Heart right ventricle (tissue), 16 donors: ENCODE measurements at regions of chr6 and their contacts with region 1.

Region 1: DNA sequence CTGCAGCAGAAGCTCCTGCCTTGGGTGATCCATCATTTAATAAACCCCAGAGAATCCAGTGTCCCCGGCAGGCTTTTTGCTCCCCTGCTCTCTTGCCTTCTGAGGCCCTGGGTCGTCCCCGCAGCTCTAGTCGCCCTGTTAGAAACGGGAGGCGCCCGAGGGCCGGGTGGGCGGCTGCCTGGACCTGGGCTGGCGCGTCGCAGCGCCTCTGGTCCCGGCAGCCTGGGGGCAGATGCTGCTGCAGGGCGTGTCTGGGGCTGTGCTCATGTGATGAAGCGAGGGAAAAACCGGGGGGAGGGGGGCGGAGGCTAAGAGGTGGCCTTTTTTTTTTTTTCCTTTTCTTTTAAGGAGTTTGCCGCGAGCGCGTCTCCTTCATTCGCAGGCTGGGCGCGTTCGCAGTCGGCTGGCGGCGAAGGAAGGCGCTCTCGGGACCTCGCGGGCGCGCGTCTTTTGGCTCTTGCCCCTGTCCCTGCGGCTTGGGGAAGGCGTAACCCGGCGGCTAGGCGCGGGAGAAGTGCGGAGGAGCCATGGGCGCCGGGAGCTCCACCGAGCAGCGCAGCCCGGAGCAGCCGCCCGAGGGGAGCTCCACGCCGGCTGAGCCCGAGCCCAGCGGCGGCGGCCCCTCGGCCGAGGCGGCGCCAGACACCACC is 394 bp downstream of the AKAP12 start:
- DNase-seq: peak; percentile 76 to 84
- ATAC-seq: peak; percentile 88 to 94 (median 91)
- H3K4me3 ChIP-seq: peak overlapping the region; percentile 68 to 94 (median 77)
- H3K27ac ChIP-seq: peak overlapping the region; percentile 77 to 89 (median 84)
- H3K4me1 ChIP-seq: peaks cover 4 to 32% (median 11%) of the 10 kb centered on the region in 9 donors
- H3K27me3 ChIP-seq: peaks cover 0 to 57% (median 7%) of the 10 kb centered on the region in 7 donors
- CTCF ChIP-seq: peak in 3 of 9 donors; percentile 35 to 37 (median 35)

Region 2: DNA sequence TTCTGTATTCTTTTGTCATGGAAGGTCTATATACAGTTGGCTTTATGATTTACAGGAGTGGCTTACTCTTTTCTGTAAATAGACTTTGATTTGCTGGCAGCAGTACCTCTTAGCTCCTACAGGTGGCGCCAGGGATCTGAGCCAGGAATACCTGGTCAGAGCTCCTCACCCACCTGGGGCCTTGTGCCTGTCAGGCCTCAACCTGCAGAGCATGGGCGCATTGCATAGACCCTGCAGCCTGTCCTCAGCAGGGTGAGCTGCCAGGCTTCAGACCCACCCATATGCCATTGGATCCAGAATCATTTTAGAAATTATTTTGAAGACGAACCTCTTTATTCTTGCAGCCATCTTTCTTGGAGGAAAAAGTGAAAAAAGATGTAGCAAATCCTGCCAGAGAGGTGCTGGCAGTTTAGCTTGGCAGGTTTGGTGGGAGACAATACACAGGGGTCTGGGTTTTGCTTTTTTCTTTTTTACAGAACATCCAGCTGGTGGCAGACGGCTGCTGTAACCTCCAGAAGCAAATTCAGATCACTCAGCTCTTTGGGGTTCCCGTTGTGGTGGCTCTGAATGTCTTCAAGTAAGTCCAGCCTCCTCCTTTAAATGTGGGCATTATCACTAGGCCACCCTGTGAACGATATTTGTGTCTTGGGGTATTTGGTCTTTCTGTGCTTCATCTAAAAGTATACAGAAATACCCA is 225.6 kb before region 1 on chr6:
- intact Hi-C with region 1: loop called in 7 of 10 experiments (anchors 2 to 10 kb)
- DNase-seq: peak; percentile 61 to 68
- ATAC-seq: peak; percentile 59 to 84 (median 79)
- H3K4me3 ChIP-seq: peak overlapping the region in 4 of 10 donors; percentile 13 to 20 (median 18)
- H3K27ac ChIP-seq: no peak overlapping the region
- H3K4me1 ChIP-seq: peaks cover 0 to 7% (median 0%) of the 10 kb centered on the region in 9 donors
- H3K27me3 ChIP-seq: no peaks in the 10 kb centered on the region
- CTCF ChIP-seq: peak; percentile 96 to 100 (median 98)

Region 3: DNA sequence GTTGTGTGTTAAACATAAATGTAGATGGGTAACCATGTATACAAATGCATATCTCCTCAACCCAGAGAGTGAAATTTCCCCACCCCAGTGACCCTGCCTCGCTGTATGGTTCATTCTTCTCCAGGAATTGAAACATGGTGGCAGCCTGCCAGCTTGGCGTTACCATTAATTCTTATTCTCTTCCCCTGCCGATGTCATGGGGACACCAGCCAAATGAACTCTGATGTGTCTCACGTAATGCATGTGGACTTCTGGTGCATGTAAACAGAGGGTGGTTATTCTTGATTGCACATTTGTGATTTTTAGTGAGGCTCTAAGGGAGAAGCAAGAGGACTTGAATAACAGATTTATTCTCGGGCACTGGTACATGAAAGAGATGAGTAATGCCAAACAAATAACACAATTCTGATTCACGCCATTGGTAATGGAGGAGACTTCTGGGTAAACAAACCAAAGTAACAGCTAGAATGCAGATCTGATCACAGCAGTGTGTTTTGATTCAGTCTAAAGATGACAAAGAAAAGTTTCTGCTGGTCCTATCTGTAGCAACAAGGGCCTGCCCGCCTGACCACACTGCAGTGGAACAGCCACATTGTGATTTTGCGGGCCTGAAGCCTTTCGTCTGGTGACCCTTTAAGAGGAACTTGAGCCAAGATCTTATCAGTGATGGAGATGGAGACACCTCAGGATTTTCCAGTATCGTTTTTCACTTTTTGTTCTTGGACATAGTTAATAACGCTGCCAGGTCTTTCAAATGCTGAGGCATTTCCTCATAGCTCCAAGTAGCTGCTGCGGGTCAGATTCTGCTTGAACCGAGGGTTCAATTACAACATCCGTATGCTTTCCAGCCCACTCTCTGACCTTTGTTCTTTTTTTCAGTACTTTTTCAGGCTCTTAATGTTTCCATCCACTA is 172.2 kb before region 1 on chr6:
- intact Hi-C with region 1: loop called in 1 of 10 experiments (anchors 10 kb)
- DNase-seq: peak; percentile 64 to 66
- ATAC-seq: peak; percentile 44 to 82 (median 69)
- H3K4me3 ChIP-seq: no peak overlapping the region
- H3K27ac ChIP-seq: peak overlapping the region; percentile 12 to 79 (median 74)
- H3K4me1 ChIP-seq: peaks cover 0 to 65% (median 30%) of the 10 kb centered on the region in 9 donors
- H3K27me3 ChIP-seq: no peaks in the 10 kb centered on the region
- CTCF ChIP-seq: no peak

Region 4: DNA sequence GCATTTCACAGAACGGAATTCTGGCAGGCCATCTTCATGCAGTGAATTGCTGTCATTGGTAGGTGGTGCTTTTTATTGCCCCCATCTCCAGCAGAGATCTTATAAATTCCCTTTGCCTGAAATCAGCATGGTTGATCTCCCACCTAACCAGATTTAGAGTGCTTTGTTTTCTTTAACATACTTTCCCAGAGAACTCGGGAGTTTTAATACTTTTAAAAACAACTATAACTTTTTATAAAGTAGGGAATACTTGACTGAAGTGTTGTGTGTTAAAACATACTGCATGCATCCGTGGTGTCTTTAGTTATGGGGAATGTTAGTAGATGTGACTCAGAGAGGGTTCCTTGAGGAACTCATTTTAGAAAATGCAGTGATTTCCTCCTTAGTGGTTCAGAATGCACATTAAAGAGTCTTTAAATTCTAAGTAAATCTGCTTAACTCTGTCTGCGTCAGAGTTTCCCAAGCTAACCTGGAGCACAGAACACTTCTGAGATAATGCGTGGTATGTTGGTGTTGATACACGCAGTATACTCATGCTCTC is 54.5 kb after region 1 on chr6:
- intact Hi-C with region 1: loop called in 1 of 10 experiments (anchors 5 kb)
- DNase-seq: no peak
- ATAC-seq: no peak
- H3K4me3 ChIP-seq: no peak overlapping the region
- H3K27ac ChIP-seq: no peak overlapping the region
- H3K4me1 ChIP-seq: peaks cover 0 to 30% (median 7%) of the 10 kb centered on the region in 9 donors
- H3K27me3 ChIP-seq: peaks cover 0 to 3% (median 0%) of the 10 kb centered on the region in 7 donors
- CTCF ChIP-seq: no peak

Region 5: DNA sequence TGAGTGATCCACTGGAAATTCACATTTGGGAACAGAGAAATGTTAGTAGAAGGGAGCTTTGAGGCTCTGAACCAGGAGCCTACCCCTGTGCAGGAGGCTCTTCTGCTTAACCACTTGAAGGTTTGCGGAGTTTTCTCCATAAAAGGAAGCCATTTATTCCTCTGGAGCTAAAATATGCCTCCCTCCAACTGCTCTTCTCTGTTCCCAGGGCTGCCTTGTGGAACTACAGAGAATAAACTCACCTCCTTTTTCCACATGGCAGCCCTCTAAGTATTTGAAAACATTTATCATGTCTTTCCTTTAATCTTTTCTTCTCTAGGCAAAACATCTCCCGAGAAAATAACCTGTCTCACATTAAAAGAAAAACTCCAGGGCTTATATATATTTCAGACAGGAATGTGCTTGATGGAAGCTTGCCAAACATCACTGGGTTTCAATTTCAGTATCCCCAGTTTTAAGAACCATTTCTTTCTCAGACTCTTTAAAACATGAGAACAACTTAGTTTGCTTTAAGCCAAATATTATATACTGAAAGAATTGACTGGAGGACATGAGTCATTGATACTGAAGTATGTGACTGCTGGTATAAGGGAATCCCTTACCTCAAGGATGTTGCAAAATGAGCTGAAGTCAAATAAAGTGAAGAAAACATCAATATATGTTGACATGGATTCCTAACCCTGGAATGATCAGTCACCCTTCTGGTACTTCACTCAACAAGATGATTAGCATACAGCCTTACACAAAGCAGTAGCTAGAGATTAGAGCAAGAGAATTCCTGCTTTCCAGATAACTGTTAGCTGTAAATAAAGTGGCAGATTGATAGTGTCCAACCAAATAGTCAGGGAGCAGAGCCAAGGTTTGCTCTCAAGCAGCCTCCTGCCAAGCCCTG is 77.2 kb after region 1 on chr6:
- intact Hi-C with region 1: loop called in 4 of 10 experiments (anchors 5 to 10 kb)
- DNase-seq: no peak
- ATAC-seq: peak in 2 of 8 donors; percentile 33 to 72
- H3K4me3 ChIP-seq: no peak overlapping the region
- H3K27ac ChIP-seq: peak overlapping the region in 1 of 10 donors; percentile 24
- H3K4me1 ChIP-seq: peaks cover 0 to 21% (median 3%) of the 10 kb centered on the region in 9 donors
- H3K27me3 ChIP-seq: no peaks in the 10 kb centered on the region
- CTCF ChIP-seq: no peak

Region 6: GRCh38 chr6:151323791-151324487 is 83.8 kb after region 1 on chr6:
- intact Hi-C with region 1: loop called in 5 of 10 experiments (anchors 2 to 10 kb)
- DNase-seq: peak; percentile 81 to 83
- ATAC-seq: peak; percentile 87 to 95 (median 90)
- H3K4me3 ChIP-seq: peak overlapping the region in 3 of 10 donors; percentile 5 to 58 (median 12)
- H3K27ac ChIP-seq: peak overlapping the region in 8 of 10 donors; percentile 33 to 76 (median 56)
- H3K4me1 ChIP-seq: peaks cover 0 to 30% (median 27%) of the 10 kb centered on the region in 9 donors
- H3K27me3 ChIP-seq: peaks cover 0 to 24% (median 6%) of the 10 kb centered on the region in 7 donors
- CTCF ChIP-seq: peak; percentile 97 to 99 (median 98)